Activated T-helper 1 cell treated with anti-CD3 and anti-CD28 coated beads, Interleukin-12 subunit alpha, Interleukin-12 subunit beta, Interleukin-2, Interleukin-4 antibody, amounts not matched to agents 30 ng/mL and 10 ng/mL and 1 ng/mL, durations not matched to agents 14 hours and 24 hours and 36 hours (primary cell): ENCODE measurements at regions of chr2 and their contacts with region 1.

Region 1: GRCh38 chr2:62306751-62307468 is 111.0 kb downstream of the B3GNT2 start:
- DNase-seq: peak; percentile 36
- H3K4me3 Mint-ChIP-seq: peak overlapping the region; percentile 54
- H3K27ac Mint-ChIP-seq: peak overlapping the region; percentile 91
- H3K4me1 Mint-ChIP-seq: peaks cover 81% of the 10 kb centered on the region
- H3K27me3 Mint-ChIP-seq: peaks cover 8% of the 10 kb centered on the region

Region 2: DNA sequence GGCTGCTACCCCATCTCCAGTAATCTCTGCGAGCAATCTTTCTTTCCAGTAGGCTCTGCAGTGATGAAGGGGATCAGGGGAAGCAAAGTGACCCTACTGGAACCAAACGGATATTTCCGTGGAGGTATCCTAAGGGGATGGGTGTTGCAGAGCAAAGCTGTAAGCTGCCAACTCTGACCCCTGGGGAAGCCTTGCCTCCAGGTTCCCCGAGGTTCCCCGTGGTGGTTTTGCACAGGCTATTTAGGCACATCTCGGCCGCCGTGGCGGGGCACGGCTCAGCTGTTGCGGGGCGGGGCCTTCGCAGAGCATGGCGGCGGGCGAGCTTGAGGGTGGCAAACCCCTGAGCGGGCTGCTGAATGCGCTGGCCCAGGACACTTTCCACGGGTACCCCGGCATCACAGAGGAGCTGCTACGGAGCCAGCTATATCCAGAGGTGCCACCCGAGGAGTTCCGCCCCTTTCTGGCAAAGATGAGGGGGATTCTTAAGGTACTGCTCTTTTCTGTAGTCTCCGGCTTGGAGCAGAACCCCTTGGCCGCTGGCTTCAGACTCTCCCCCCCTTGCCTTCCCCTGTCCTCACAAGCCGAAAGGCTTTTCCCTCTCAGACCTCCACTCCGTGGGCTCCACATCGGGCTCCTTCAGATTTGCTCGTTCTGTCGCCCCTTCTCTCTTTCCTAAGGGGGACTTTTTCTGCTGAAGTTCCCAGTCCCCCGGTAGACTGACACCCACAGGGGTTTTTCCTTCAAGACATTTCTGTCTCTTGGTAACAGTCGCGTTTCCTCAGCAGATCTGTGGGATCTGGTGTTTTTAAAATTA is 401.3 kb before region 1 on chr2 and contains the start of gene COMMD1:
- intact Hi-C with region 1: loop called (anchors 5 kb)
- DNase-seq: peak; percentile 78
- H3K4me3 Mint-ChIP-seq: peak within 1 kb of the TSS; percentile 97
- H3K27ac Mint-ChIP-seq: peak within 1 kb of the TSS; percentile 81
- H3K4me1 Mint-ChIP-seq: peaks cover 18% of the 10 kb centered on the region
- H3K27me3 Mint-ChIP-seq: no peaks in the 10 kb centered on the region
- total RNA-seq, gene COMMD1: 25.4 and 28.9 TPM in 2 replicates

Region 3: DNA sequence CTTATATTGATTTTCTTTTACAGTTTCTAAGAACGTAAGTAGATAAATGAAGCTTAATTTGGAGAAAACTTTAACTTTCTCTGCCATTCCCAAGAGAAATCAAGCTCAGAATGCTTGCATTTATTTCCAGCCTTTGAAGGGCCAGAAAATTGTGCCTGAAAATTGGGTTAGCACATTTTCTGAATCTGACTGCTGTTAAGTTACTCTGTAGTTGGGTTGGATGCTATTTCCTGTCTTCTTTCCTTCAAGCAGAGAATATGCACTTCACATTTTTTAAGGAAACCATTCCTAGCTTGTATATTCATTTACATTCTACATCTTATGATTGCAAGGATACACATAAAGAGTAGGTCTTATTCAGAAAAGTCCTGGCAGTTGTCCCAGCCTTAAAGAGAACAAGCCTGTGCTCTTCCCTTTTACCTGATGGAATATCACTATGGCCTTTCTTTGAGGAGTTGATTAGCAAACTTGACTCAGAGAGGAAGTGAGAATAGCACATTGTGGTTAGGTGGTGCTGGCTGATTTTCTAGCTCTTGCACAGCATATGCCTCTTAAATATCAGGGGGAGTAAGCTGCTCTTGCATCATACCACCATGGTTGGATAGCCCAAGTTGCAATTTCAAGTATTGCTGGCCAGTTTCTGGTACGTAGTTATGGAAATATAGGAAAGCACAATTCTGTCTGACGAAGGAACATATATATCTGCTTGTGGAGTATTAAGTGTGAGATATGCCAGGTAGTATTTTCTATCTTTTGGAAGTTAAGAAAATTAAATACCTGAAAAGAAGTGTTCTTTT is 267.7 kb before region 1 on chr2:
- intact Hi-C with region 1: loop called (anchors 2 kb)
- DNase-seq: no peak
- H3K4me3 Mint-ChIP-seq: no peak overlapping the region
- H3K27ac Mint-ChIP-seq: peak overlapping the region; percentile 41
- H3K4me1 Mint-ChIP-seq: peaks cover 16% of the 10 kb centered on the region
- H3K27me3 Mint-ChIP-seq: no peaks in the 10 kb centered on the region

Region 4: GRCh38 chr2:62195421-62196277 is 111.3 kb before region 1 on chr2 and contains the start of gene B3GNT2:
- intact Hi-C with region 1: loop called (anchors 1 kb)
- DNase-seq: peak; percentile 75
- H3K4me3 Mint-ChIP-seq: peak within 1 kb of the TSS; percentile 87
- H3K27ac Mint-ChIP-seq: peak within 1 kb of the TSS; percentile 89
- H3K4me1 Mint-ChIP-seq: peaks cover 36% of the 10 kb centered on the region
- H3K27me3 Mint-ChIP-seq: no peaks in the 10 kb centered on the region
- total RNA-seq, gene B3GNT2: 32.8 and 37.3 TPM in 2 replicates

Region 5: DNA sequence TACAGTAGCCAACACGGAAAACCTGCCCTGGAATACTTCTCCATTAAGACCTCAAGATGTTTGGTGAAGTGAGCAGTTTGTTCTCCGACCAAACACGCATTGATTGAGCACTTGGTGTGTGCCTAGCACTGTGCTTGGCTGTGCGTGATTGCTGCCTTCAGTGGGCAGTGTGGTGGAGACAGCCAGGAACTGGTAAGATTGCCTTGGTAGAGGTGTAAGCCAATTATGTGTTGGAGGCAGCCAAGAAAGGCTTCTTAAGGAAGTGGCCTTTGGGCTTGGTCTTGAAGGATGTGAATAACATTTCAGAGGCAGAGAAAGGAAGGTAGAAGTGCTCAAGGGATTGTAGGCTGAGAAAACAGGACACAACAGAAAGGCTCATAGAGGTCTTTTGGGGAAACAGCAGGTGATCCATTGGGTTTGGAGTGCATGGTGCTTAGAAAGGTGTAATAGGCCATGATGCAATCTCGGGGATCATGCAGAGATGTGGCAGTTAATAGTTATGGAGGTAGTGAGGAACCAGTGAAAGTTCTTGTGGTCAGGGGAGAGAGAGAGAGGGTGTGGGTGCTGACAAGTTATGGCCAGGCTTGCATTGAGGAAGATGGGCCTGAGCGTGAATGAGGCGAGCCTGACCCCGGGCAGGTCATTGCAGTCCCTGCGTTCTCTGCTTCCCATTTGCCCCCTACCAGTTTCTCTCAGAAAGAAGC is 104.7 kb before region 1 on chr2:
- intact Hi-C with region 1: loop called (anchors 1 kb)
- DNase-seq: no peak
- H3K4me3 Mint-ChIP-seq: peak overlapping the region; percentile 50
- H3K27ac Mint-ChIP-seq: peak overlapping the region; percentile 78
- H3K4me1 Mint-ChIP-seq: peaks cover 73% of the 10 kb centered on the region
- H3K27me3 Mint-ChIP-seq: no peaks in the 10 kb centered on the region

Region 6: GRCh38 chr2:62321380-62322289 is 14.7 kb after region 1 on chr2:
- intact Hi-C with region 1: loop called (anchors 2 kb)
- DNase-seq: no peak
- H3K4me3 Mint-ChIP-seq: no peak overlapping the region
- H3K27ac Mint-ChIP-seq: peak overlapping the region; percentile 51
- H3K4me1 Mint-ChIP-seq: peaks cover 15% of the 10 kb centered on the region
- H3K27me3 Mint-ChIP-seq: no peaks in the 10 kb centered on the region

Region 7: GRCh38 chr2:62410015-62410453 is 103.1 kb after region 1 on chr2:
- intact Hi-C with region 1: loop called (anchors 5 kb)
- DNase-seq: no peak
- H3K4me3 Mint-ChIP-seq: no peak overlapping the region
- H3K27ac Mint-ChIP-seq: no peak overlapping the region
- H3K4me1 Mint-ChIP-seq: peaks cover 4% of the 10 kb centered on the region
- H3K27me3 Mint-ChIP-seq: peaks cover 2% of the 10 kb centered on the region